Activated naive CD4-positive, alpha-beta T cell treated with anti-CD3 and anti-CD28 coated beads for 36 hours (primary cell): ENCODE measurements at regions of chr4 and their contacts with region 1.

Region 1: GRCh38 chr4:142126890-142127497 is 490.6 kb downstream of the IL15 start:
- DNase-seq: peak; percentile 81
- H3K4me3 Mint-ChIP-seq: no peak overlapping the region
- H3K27ac Mint-ChIP-seq: no peak overlapping the region
- H3K4me1 Mint-ChIP-seq: peaks cover 37% of the 10 kb centered on the region
- H3K27me3 Mint-ChIP-seq: no peaks in the 10 kb centered on the region

Region 2: GRCh38 chr4:141158219-141158618 is 968.8 kb before region 1 on chr4:
- CTCF ChIA-PET with region 1: no interaction called
- intact Hi-C with region 1: loop called (anchors 5 kb)
- DNase-seq: no peak
- H3K4me3 Mint-ChIP-seq: no peak overlapping the region
- H3K27ac Mint-ChIP-seq: no peak overlapping the region
- H3K4me1 Mint-ChIP-seq: no peaks in the 10 kb centered on the region
- H3K27me3 Mint-ChIP-seq: peaks cover 10% of the 10 kb centered on the region

Region 3: GRCh38 chr4:142043509-142043908 is 83.5 kb before region 1 on chr4:
- CTCF ChIA-PET with region 1: no interaction called
- intact Hi-C with region 1: no loop called
- DNase-seq: no peak
- H3K4me3 Mint-ChIP-seq: no peak overlapping the region
- H3K27ac Mint-ChIP-seq: no peak overlapping the region
- H3K4me1 Mint-ChIP-seq: peaks cover 19% of the 10 kb centered on the region
- H3K27me3 Mint-ChIP-seq: no peaks in the 10 kb centered on the region

Region 4: GRCh38 chr4:142262956-142263355 is 136.0 kb after region 1 on chr4:
- CTCF ChIA-PET with region 1: no interaction called
- intact Hi-C with region 1: no loop called
- DNase-seq: no peak
- H3K4me3 Mint-ChIP-seq: no peak overlapping the region
- H3K27ac Mint-ChIP-seq: no peak overlapping the region
- H3K4me1 Mint-ChIP-seq: peaks cover 62% of the 10 kb centered on the region
- H3K27me3 Mint-ChIP-seq: no peaks in the 10 kb centered on the region

Region 5: GRCh38 chr4:142353149-142353738 is 226.2 kb after region 1 on chr4:
- CTCF ChIA-PET with region 1: no interaction called
- intact Hi-C with region 1: loop called (anchors 2 kb)
- DNase-seq: no peak
- H3K4me3 Mint-ChIP-seq: peak overlapping the region; percentile 48
- H3K27ac Mint-ChIP-seq: peak overlapping the region; percentile 90
- H3K4me1 Mint-ChIP-seq: peaks cover 94% of the 10 kb centered on the region
- H3K27me3 Mint-ChIP-seq: no peaks in the 10 kb centered on the region

Region 6: GRCh38 chr4:142549726-142550463 is 422.9 kb after region 1 on chr4:
- CTCF ChIA-PET with region 1: no interaction called
- intact Hi-C with region 1: loop called (anchors 5 kb)
- DNase-seq: no peak
- H3K4me3 Mint-ChIP-seq: no peak overlapping the region
- H3K27ac Mint-ChIP-seq: peak overlapping the region; percentile 60
- H3K4me1 Mint-ChIP-seq: peaks cover 71% of the 10 kb centered on the region
- H3K27me3 Mint-ChIP-seq: no peaks in the 10 kb centered on the region

Region 7: DNA sequence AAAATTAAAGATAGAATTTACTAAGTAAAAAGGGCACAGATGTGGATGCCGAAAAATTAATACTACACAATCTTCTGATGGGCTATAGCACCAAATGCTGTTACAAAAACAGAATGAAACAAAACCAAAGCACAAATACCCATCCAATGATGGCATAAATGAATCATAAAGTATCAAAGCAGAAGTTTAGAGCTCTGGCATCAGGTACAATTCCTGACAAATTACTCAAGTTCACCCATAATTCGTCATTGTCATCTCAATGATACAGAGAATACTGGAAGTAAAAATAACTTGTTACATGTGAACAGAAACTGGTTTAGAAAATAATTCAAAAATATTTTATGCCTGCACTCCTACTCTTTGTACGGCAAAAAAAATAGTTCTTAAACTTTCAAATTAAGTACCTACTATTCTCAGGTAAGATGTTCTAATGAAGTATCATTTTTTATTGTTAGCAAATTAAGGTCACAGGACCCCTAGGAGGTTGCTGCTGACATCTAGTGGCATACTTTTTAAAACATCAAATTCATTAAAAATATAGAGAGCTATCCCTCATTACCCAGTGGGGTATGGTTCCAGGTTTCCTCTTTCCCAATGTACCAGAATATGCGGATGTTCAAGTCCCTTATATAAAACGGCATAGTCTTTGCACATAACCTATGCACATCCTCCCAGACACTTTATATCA is 593.0 kb after region 1 on chr4:
- CTCF ChIA-PET with region 1: interaction called, 3 read pairs
- intact Hi-C with region 1: loop called (anchors 1 kb)
- DNase-seq: no peak
- H3K4me3 Mint-ChIP-seq: no peak overlapping the region
- H3K27ac Mint-ChIP-seq: peak overlapping the region; percentile 84
- H3K4me1 Mint-ChIP-seq: peaks cover 42% of the 10 kb centered on the region
- H3K27me3 Mint-ChIP-seq: no peaks in the 10 kb centered on the region

Region 8: DNA sequence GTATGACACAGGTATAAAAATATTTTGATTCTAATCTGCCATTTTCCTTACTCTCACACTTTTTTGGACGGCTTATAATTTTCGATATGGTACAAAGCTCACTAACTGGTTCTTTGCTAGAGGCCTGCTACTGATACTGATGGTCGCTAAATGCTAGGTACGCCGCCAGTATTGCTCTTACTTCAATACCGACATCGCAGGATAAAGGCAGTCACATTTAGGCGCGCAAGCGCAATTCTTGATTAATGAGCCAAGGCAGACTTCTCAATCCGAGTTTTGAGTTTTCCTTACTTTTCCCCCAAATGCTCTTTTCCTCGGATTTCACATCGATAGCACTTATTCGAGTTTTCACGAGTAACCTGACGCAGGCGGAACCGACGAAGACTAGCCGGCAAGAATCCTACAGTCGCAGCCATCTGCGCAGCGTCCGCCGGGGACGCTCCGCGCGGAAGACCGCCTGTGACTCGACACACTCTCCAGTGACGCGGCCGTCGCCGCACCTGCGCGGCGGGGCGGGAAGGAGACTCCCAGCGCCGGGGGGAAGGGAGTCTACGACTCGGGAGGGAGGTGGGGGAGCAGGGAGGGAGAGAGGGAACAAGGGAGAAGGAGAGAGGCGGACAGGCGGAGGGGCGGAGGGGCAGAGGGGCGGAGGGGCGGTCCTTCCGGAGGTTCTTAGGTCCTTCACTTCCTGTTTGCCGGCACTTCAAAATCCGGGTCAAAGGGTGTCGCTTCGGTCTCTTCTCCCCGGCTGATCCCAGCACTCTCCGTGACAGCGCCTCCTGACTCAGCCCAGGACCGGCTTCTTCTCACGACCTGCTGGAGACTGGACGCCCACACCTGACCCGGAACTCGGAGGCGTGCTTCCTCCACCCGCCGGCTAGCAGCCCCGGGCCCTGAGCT is 1057.5 kb after region 1 on chr4 and contains the start of gene USP38:
- CTCF ChIA-PET with region 1: no interaction called
- intact Hi-C with region 1: loop called (anchors 2 kb)
- DNase-seq: peak; percentile 93
- H3K4me3 Mint-ChIP-seq: peak within 1 kb of the TSS; percentile 95
- H3K27ac Mint-ChIP-seq: peak within 1 kb of the TSS; percentile 97
- H3K4me1 Mint-ChIP-seq: peaks cover 40% of the 10 kb centered on the region
- H3K27me3 Mint-ChIP-seq: no peaks in the 10 kb centered on the region
- total RNA-seq, gene USP38: 14.4 to 15.5 TPM